Activated CD4-positive, alpha-beta T cell treated with anti-CD3 and anti-CD28 coated beads, Interleukin-2, amount 10 ng/mL, durations not matched to agents 24 days and 14 days (primary cell): ENCODE measurements at regions of chr22 and their contacts with region 1.

Region 1: DNA sequence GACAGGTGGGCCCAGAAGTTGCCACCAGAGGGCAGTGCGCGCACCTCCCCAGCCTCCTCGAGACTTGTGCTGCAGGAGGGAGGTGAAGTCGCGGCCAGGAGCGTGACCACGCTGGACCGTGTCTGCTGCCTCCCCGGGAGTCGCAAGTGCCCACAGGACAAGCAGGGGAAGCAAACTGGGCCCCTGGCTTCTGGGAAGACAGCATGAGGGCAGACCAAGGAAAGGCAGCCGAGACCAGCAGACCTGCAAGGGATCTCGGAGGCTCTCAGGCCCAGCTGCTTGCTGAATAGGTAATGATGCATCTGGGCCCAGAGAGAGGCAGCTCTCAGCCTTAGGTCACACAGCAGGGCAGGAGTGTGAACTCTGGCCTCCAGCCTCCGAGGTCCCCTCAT is 17.0 kb upstream of the IL2RB start:
- DNase-seq: peak; percentile 94
- H3K4me3 Mint-ChIP-seq: peak overlapping the region; percentile 69
- H3K27ac Mint-ChIP-seq: peak overlapping the region; percentile 78
- H3K4me1 Mint-ChIP-seq: peaks cover 69% of the 10 kb centered on the region
- H3K27me3 Mint-ChIP-seq: peaks cover 2% of the 10 kb centered on the region

Region 2: DNA sequence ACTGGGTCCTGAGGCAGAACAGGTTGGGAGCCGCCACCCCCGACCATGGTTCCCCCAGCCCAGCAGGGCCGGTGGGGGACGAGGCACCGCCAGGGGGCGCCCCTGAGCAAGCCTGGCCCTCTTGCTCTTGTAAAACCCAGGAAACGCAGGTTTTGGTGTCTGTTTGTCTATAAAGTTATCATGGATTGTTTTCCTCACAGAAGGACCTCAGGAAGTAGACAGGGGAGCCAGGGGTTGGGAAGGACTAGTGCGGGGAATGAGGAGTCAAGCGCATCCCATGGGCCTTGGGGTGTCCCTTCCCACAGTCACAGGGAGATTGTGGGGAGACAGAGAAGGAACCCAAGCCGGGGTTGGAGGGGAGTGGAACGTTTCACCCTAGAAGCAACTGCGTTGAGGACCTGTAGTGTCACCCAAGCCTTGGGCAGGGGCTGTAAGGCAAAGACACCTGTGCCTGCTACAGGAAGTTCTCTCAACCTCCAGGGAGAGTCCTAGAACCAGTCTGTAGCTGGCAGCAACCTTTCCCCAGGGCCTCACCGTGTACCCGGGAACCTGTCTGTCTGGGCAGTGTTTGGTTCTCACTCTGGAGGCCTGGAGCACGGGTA is 88.7 kb before region 1 on chr22:
- intact Hi-C with region 1: loop called (anchors 1 kb)
- DNase-seq: peak; percentile 96
- H3K4me3 Mint-ChIP-seq: peak overlapping the region; percentile 79
- H3K27ac Mint-ChIP-seq: peak overlapping the region; percentile 98
- H3K4me1 Mint-ChIP-seq: peaks cover 56% of the 10 kb centered on the region
- H3K27me3 Mint-ChIP-seq: no peaks in the 10 kb centered on the region

Region 3: DNA sequence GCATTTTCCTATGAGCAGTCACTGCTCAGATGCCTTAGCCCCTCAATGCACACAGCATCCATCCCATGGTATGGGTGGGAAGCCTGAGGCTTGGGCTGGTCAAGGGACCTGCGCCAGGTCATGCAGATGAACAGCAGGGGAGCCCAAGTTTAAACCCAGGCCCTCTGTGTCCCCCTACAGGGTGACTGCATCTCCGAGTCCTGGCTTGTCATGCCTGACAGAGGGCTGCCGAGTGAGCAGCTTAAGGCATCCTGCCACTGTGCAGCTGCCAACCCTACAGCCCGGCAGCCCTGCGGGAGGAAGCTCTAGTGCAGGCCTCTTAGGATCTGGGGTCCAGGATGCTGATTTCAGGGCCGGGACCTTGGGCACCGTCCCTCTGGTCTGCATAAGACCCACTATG is 26.9 kb before region 1 on chr22:
- intact Hi-C with region 1: loop called (anchors 1 kb)
- DNase-seq: no peak
- H3K4me3 Mint-ChIP-seq: no peak overlapping the region
- H3K27ac Mint-ChIP-seq: peak overlapping the region; percentile 97
- H3K4me1 Mint-ChIP-seq: peaks cover 54% of the 10 kb centered on the region
- H3K27me3 Mint-ChIP-seq: no peaks in the 10 kb centered on the region

Region 4: GRCh38 chr22:37148742-37149665 is 17.7 kb before region 1 on chr22:
- intact Hi-C with region 1: loop called (anchors 1 kb)
- DNase-seq: peak; percentile 68
- H3K4me3 Mint-ChIP-seq: peak overlapping the region; percentile 96
- H3K27ac Mint-ChIP-seq: peak overlapping the region; percentile 99
- H3K4me1 Mint-ChIP-seq: peaks cover 54% of the 10 kb centered on the region
- H3K27me3 Mint-ChIP-seq: peaks cover 2% of the 10 kb centered on the region

Region 5: GRCh38 chr22:37193629-37194191 is 27.0 kb after region 1 on chr22:
- intact Hi-C with region 1: loop called (anchors 1 kb)
- DNase-seq: peak; percentile 89
- H3K4me3 Mint-ChIP-seq: peak overlapping the region; percentile 55
- H3K27ac Mint-ChIP-seq: peak overlapping the region; percentile 75
- H3K4me1 Mint-ChIP-seq: peaks cover 46% of the 10 kb centered on the region
- H3K27me3 Mint-ChIP-seq: no peaks in the 10 kb centered on the region

Region 6: DNA sequence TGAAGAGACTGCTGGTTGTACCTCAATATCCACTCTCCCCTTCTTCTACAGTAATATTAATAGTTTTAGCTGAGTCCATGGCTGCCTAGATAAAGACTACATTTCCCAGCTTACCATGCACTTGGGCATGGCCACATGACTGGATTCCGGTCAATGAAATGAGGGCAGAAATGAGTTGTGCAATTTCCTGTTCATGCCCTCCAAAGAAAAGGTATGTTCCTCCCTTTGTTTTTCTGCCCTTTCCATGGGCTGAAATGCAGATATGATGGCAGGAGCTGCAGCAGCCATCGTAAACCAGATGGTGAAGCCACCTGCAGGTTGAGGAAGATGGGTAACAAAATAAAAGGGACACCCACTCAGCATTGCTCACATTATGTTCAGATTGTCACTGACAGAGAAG is 275.9 kb after region 1 on chr22:
- intact Hi-C with region 1: no loop called
- DNase-seq: no peak
- H3K4me3 Mint-ChIP-seq: no peak overlapping the region
- H3K27ac Mint-ChIP-seq: no peak overlapping the region
- H3K4me1 Mint-ChIP-seq: peaks cover 6% of the 10 kb centered on the region
- H3K27me3 Mint-ChIP-seq: peaks cover 16% of the 10 kb centered on the region